Gastrocnemius medialis (tissue), 4 donors: ENCODE measurements at regions of chr21 and their contacts with region 1.

Region 1: DNA sequence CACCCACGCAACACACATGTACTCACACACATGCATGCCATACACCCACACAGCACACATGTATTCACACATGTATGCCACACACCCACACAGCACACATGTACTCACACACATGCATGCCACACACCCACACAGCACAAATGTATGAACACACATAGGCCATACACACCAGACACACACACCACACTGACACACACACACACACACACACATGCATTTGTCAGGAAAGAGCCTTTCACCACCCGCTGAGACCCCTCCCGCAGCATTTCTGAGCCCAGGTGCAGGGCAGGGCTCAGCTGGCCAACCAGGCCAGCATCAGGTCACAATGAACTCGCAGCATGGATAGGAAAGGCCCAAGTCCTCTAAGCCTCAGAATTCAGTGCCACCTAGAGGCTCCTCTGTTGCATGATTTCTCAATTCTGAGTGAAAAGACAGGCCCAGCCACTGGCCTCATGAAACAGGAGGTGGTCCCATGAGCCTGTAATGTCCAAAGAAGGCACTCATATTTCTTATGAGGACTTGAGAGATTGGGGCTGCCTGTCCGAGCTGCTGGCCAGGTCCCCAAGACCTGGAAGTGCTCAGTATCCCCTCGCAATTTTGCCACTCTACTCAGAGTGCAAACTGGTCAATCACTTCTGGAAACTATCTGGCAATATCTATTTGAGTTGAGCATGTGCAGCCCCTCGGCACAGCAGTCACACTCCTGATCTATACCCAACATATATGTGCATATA is 57.3 kb downstream of the PSMG1 start:
- DNase-seq: peak in 1 of 2 donors; percentile 46
- ATAC-seq: peak; percentile 91 to 99
- H3K4me3 ChIP-seq: no peak overlapping the region
- H3K27ac ChIP-seq: peak overlapping the region in 2 of 4 donors; percentile 9 to 39
- H3K4me1 ChIP-seq: peaks cover 6 to 9% of the 10 kb centered on the region in 2 donors
- H3K27me3 ChIP-seq: no peaks in the 10 kb centered on the region
- CTCF ChIP-seq: peak; percentile 54 to 67 (median 65)
- POLR2A ChIP-seq: no peak

Region 2: DNA sequence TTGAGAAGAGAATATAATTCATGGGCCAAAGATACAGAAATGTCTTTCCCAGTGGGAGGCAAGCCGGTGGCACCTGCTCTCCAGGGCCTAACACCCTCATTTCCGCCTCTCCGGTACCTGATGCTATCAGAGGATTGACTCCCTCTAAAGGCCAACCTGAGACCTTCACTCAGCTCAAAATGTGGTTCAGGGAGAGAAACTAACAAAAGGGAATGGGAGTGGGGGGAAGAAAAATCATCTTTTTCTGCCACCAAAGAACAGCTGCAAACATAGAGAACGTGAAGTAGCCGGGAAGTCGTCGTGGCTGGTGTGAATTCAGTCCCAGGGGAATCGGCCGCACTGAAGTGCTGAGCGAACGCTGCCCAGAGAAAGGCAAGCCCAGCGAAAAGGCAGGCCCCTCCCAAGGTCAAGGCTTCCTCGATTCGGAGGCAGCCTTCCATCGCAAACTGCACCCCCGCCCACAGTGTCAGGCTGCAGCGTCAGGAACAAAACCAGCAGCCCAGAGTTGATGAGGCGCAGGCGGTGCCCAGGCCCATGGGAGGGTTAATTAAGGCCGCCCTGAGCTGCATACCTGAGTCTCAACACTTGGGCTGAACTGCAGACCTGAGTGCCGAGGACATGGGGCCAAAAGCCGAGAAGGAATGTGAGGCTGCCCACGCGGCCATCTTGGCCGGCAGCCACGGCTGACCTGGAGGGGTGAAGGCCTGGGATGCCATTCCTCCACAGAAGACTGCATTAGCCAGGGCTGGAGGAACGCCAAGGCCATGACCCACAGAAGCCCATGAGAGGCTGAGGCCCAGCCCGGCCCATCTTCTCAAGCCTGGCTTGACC is 102.8 kb before region 1 on chr21:
- in situ Hi-C with region 1: loop called in 1 of 4 experiments (anchors 25 kb)
- intact Hi-C with region 1: loop called (anchors 5 kb)
- DNase-seq: peak in 1 of 2 donors; percentile 32
- ATAC-seq: peak; percentile 80 to 83
- H3K4me3 ChIP-seq: peak overlapping the region in 2 of 4 donors; percentile 4 to 28
- H3K27ac ChIP-seq: peak overlapping the region; percentile 63 to 73 (median 69)
- H3K4me1 ChIP-seq: peaks cover 10 to 14% of the 10 kb centered on the region in 2 donors
- H3K27me3 ChIP-seq: no peaks in the 10 kb centered on the region
- CTCF ChIP-seq: peak in 4 of 5 experiments; percentile 28 to 46 (median 44)
- POLR2A ChIP-seq: no peak

Region 3: GRCh38 chr21:40567501-40567900 is 1441.6 kb after region 1 on chr21:
- in situ Hi-C with region 1: no loop called
- intact Hi-C with region 1: no loop called
- DNase-seq: no peak
- ATAC-seq: no peak
- H3K4me3 ChIP-seq: no peak overlapping the region
- H3K27ac ChIP-seq: no peak overlapping the region
- H3K4me1 ChIP-seq: no peaks in the 10 kb centered on the region
- H3K27me3 ChIP-seq: no peaks in the 10 kb centered on the region
- CTCF ChIP-seq: no peak
- POLR2A ChIP-seq: no peak